CD4-positive, alpha-beta memory T cell (primary cell): ENCODE measurements at regions of chr1 and their contacts with region 1.

Region 1: GRCh38 chr1:40040511-40041465 is at the start of gene CAP1:
- DNase-seq: peak; percentile 100
- H3K4me3 ChIP-seq: peak within 1 kb of the TSS; percentile 78 to 92
- H3K4me3 Mint-ChIP-seq: peak within 1 kb of the TSS; percentile 90 to 98 (median 96)
- H3K27ac ChIP-seq: peak within 1 kb of the TSS; percentile 86
- H3K27ac Mint-ChIP-seq: peak within 1 kb of the TSS; percentile 92 to 99 (median 97)
- H3K4me1 ChIP-seq: peaks cover 78% of the 10 kb centered on the region
- H3K4me1 Mint-ChIP-seq: peaks cover 44 to 91% (median 57%) of the 10 kb centered on the region in 4 donors
- H3K27me3 ChIP-seq: no peaks in the 10 kb centered on the region
- H3K27me3 Mint-ChIP-seq: no peaks in the 10 kb centered on the region
- total RNA-seq, gene CAP1: 285 to 305 TPM

Region 2: GRCh38 chr1:39575191-39576015 is 465.4 kb before region 1 on chr1:
- CTCF ChIA-PET with region 1: no interaction called
- POLR2A ChIA-PET with region 1: interaction called, 3 read pairs
- intact Hi-C with region 1: loop called (anchors 5 kb)
- DNase-seq: peak; percentile 57 to 72 (median 64)
- H3K4me3 ChIP-seq: peak overlapping the region; percentile 31 to 87
- H3K4me3 Mint-ChIP-seq: peak overlapping the region; percentile 90 to 99 (median 92)
- H3K27ac ChIP-seq: peak overlapping the region; percentile 76
- H3K27ac Mint-ChIP-seq: peak overlapping the region; percentile 95 to 98 (median 96)
- H3K4me1 ChIP-seq: peaks cover 38% of the 10 kb centered on the region
- H3K4me1 Mint-ChIP-seq: peaks cover 29 to 45% (median 36%) of the 10 kb centered on the region in 4 donors
- H3K27me3 ChIP-seq: no peaks in the 10 kb centered on the region
- H3K27me3 Mint-ChIP-seq: no peaks in the 10 kb centered on the region

Region 3: GRCh38 chr1:39845275-39846116 is 195.3 kb before region 1 on chr1:
- CTCF ChIA-PET with region 1: no interaction called
- POLR2A ChIA-PET with region 1: no interaction called
- intact Hi-C with region 1: no loop called
- DNase-seq: peak; percentile 86 to 96 (median 90)
- H3K4me3 ChIP-seq: no peak overlapping the region
- H3K4me3 Mint-ChIP-seq: peak overlapping the region; percentile 55 to 88 (median 67)
- H3K27ac ChIP-seq: peak overlapping the region; percentile 68
- H3K27ac Mint-ChIP-seq: peak overlapping the region; percentile 92 to 97 (median 93)
- H3K4me1 ChIP-seq: peaks cover 56% of the 10 kb centered on the region
- H3K4me1 Mint-ChIP-seq: peaks cover 46 to 64% (median 52%) of the 10 kb centered on the region in 4 donors
- H3K27me3 ChIP-seq: no peaks in the 10 kb centered on the region
- H3K27me3 Mint-ChIP-seq: no peaks in the 10 kb centered on the region

Region 4: GRCh38 chr1:40064797-40065499 is 24.2 kb after region 1 on chr1:
- CTCF ChIA-PET with region 1: interaction called, 14 read pairs
- POLR2A ChIA-PET with region 1: interaction called, 115 read pairs
- intact Hi-C with region 1: no loop called
- DNase-seq: no peak
- H3K4me3 ChIP-seq: no peak overlapping the region
- H3K4me3 Mint-ChIP-seq: peak overlapping the region in 4 of 8 donors; percentile 30 to 63 (median 48)
- H3K27ac ChIP-seq: peak overlapping the region; percentile 27
- H3K27ac Mint-ChIP-seq: peak overlapping the region; percentile 77 to 96 (median 86)
- H3K4me1 ChIP-seq: peaks cover 45% of the 10 kb centered on the region
- H3K4me1 Mint-ChIP-seq: peaks cover 49 to 63% (median 54%) of the 10 kb centered on the region in 4 donors
- H3K27me3 ChIP-seq: no peaks in the 10 kb centered on the region
- H3K27me3 Mint-ChIP-seq: no peaks in the 10 kb centered on the region

Region 5: GRCh38 chr1:40096977-40097782 is 56.4 kb after region 1 on chr1 and contains the start of gene PPT1:
- CTCF ChIA-PET with region 1: no interaction called
- POLR2A ChIA-PET with region 1: interaction called, 16 read pairs
- intact Hi-C with region 1: no loop called
- DNase-seq: peak; percentile 73 to 82 (median 79)
- H3K4me3 ChIP-seq: peak within 1 kb of the TSS; percentile 81 to 91
- H3K4me3 Mint-ChIP-seq: peak within 1 kb of the TSS; percentile 90 to 99 (median 96)
- H3K27ac ChIP-seq: peak within 1 kb of the TSS; percentile 47
- H3K27ac Mint-ChIP-seq: peak within 1 kb of the TSS; percentile 83 to 98 (median 97)
- H3K4me1 ChIP-seq: peaks cover 19% of the 10 kb centered on the region
- H3K4me1 Mint-ChIP-seq: peaks cover 33 to 40% (median 35%) of the 10 kb centered on the region in 4 donors
- H3K27me3 ChIP-seq: no peaks in the 10 kb centered on the region
- H3K27me3 Mint-ChIP-seq: peaks cover 0 to 7% of the 10 kb centered on the region in 2 donors
- total RNA-seq, gene PPT1: 56.7 to 64.8 TPM

Region 6: GRCh38 chr1:40257688-40258444 is 217.1 kb after region 1 on chr1 and contains the start of gene ZMPSTE24:
- CTCF ChIA-PET with region 1: no interaction called
- POLR2A ChIA-PET with region 1: interaction called, 4 read pairs
- intact Hi-C with region 1: loop called (anchors 1 kb)
- DNase-seq: peak; percentile 95 to 99 (median 96)
- H3K4me3 ChIP-seq: peak within 1 kb of the TSS; percentile 86 to 99
- H3K4me3 Mint-ChIP-seq: peak within 1 kb of the TSS; percentile 92 to 99 (median 96)
- H3K27ac ChIP-seq: peak within 1 kb of the TSS; percentile 98
- H3K27ac Mint-ChIP-seq: peak within 1 kb of the TSS; percentile 98 to 100 (median 99)
- H3K4me1 ChIP-seq: peaks cover 37% of the 10 kb centered on the region
- H3K4me1 Mint-ChIP-seq: peaks cover 25 to 58% (median 38%) of the 10 kb centered on the region in 4 donors
- H3K27me3 ChIP-seq: no peaks in the 10 kb centered on the region
- H3K27me3 Mint-ChIP-seq: no peaks in the 10 kb centered on the region
- total RNA-seq, gene ZMPSTE24: 19.7 to 21.0 TPM